GM12878 (cell line): ENCODE measurements at regions of chr18 and their contacts with region 1.

Region 1: DNA sequence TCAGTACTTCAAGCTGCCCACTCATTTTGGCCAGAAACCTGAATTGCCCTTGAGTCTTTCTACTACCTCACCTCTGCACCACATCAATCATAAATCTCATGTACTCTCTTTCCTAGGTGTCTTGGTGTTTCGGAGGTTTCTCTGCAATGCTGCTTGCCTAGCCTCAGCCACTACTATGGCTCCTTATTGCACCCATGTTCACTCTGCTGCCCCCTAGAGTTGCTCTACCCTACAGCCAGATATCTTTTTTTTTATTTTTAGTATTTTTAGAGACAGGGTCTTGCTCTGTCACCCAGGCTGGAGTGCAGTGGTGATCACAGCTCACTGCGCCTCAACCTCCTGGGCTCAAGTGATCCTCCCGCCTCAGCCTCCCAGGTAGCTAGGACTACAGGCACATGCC is 413.0 kb downstream of the PTPRM start:
- DNase-seq: no peak
- ATAC-seq: peak; percentile 35
- H3K4me3 ChIP-seq: no peak overlapping the region
- H3K27ac ChIP-seq: no peak overlapping the region
- H3K4me1 ChIP-seq: no peaks in the 10 kb centered on the region
- H3K27me3 ChIP-seq: no peaks in the 10 kb centered on the region
- CTCF ChIP-seq: peak in 2 of 3 experiments; percentile 9 to 22; a peak in 1 of 6 replicates
- EP300 ChIP-seq: no peak
- POLR2A ChIP-seq: no peak
- RAD21 ChIP-seq: no peak

Region 2: DNA sequence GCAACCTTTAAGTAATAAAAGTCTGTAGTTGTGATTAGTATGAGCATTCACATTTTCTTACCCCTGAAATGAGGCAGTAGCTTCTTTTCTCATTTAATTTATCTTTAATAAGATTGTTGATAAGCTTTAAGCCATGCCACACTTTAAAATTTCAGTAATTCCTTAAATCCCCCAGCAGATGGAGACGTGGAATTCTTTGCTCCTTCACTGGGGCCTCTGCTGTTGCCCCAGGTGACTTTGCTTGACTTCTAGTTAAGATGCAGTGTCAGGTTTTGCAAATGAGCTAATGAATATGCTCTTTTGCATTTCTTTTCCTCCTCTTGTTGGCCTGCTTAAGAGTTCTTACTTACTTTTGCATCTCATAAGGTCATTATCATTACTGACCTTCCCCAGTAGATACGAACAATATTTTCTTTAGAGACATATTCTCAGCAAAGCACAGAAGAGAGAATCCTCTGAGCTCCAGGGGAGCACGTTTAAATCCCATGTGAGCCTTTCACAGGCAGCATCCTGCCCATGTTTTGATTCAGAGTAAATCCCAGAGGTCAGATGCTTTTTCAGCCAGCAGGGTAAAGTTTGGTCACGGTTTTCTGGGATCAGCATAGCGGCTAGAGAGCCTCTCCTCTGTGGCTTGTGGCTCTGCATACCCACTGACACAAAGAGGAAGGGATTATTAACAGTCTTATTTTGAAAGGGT is 190.1 kb before region 1 on chr18:
- CTCF ChIA-PET with region 1: interaction called, 3 read pairs
- POLR2A ChIA-PET with region 1: no interaction called
- RAD21 ChIA-PET with region 1: no interaction called
- SMC1A ChIA-PET with region 1: interaction called, 10 read pairs
- in situ Hi-C with region 1: no loop called
- intact Hi-C with region 1: no loop called
- DNase-seq: no peak
- ATAC-seq: no peak
- H3K4me3 ChIP-seq: no peak overlapping the region
- H3K27ac ChIP-seq: no peak overlapping the region
- H3K4me1 ChIP-seq: no peaks in the 10 kb centered on the region
- H3K27me3 ChIP-seq: no peaks in the 10 kb centered on the region
- CTCF ChIP-seq: peak in 2 of 3 experiments; percentile 3 to 32; a peak in 1 of 6 replicates
- EP300 ChIP-seq: no peak
- POLR2A ChIP-seq: no peak
- RAD21 ChIP-seq: no peak

Region 3: GRCh38 chr18:7946734-7947377 is 33.3 kb before region 1 on chr18:
- CTCF ChIA-PET with region 1: interaction called, 6 read pairs
- POLR2A ChIA-PET with region 1: interaction called, 3 read pairs
- RAD21 ChIA-PET with region 1: interaction called, 3 read pairs
- SMC1A ChIA-PET with region 1: interaction called, 12 read pairs
- in situ Hi-C with region 1: no loop called
- intact Hi-C with region 1: no loop called
- DNase-seq: no peak
- ATAC-seq: peak; percentile 60
- H3K4me3 ChIP-seq: no peak overlapping the region
- H3K27ac ChIP-seq: no peak overlapping the region
- H3K4me1 ChIP-seq: no peaks in the 10 kb centered on the region
- H3K27me3 ChIP-seq: no peaks in the 10 kb centered on the region
- CTCF ChIP-seq: no peak
- EP300 ChIP-seq: no peak
- POLR2A ChIP-seq: no peak
- RAD21 ChIP-seq: no peak

Region 4: GRCh38 chr18:7953095-7953958 is 26.8 kb before region 1 on chr18:
- CTCF ChIA-PET with region 1: interaction called, 10 read pairs
- POLR2A ChIA-PET with region 1: no interaction called
- RAD21 ChIA-PET with region 1: interaction called, 8 read pairs
- SMC1A ChIA-PET with region 1: interaction called, 12 read pairs
- in situ Hi-C with region 1: no loop called
- intact Hi-C with region 1: no loop called
- DNase-seq: peak; percentile 91
- ATAC-seq: peak; percentile 95
- H3K4me3 ChIP-seq: no peak overlapping the region
- H3K27ac ChIP-seq: 0 out of 2 replicates have a peak overlapping the region, but pooled peaks have one; percentile 31
- H3K4me1 ChIP-seq: no peaks in the 10 kb centered on the region
- H3K27me3 ChIP-seq: no peaks in the 10 kb centered on the region
- CTCF ChIP-seq: no peak
- EP300 ChIP-seq: peak; percentile 96 to 97
- POLR2A ChIP-seq: no peak
- RAD21 ChIP-seq: no peak